Caco-2 (cell line): ENCODE measurements at regions of chr19 and their contacts with region 1.

Region 1: GRCh38 chr19:35269421-35270117 is 807 bp downstream of the USF2 start:
- DNase-seq: peak; percentile 94 to 96
- H3K4me3 ChIP-seq: peak overlapping the region; percentile 61
- H3K4me3 Mint-ChIP-seq: peak overlapping the region; percentile 79
- H3K27ac Mint-ChIP-seq: no peak overlapping the region
- H3K4me1 ChIP-seq: peaks cover 10% of the 10 kb centered on the region
- H3K4me1 Mint-ChIP-seq: no peaks in the 10 kb centered on the region
- H3K27me3 ChIP-seq: no peaks in the 10 kb centered on the region
- H3K27me3 Mint-ChIP-seq: no peaks in the 10 kb centered on the region
- CTCF ChIP-seq: peak; percentile 65 to 99

Region 2: GRCh38 chr19:35279985-35280821 is 10.6 kb after region 1 on chr19:
- CTCF ChIA-PET with region 1: interaction called, 10 read pairs
- POLR2A ChIA-PET with region 1: no interaction called
- intact Hi-C with region 1: no loop called
- DNase-seq: no peak
- H3K4me3 ChIP-seq: no peak overlapping the region
- H3K4me3 Mint-ChIP-seq: no peak overlapping the region
- H3K27ac Mint-ChIP-seq: no peak overlapping the region
- H3K4me1 ChIP-seq: no peaks in the 10 kb centered on the region
- H3K4me1 Mint-ChIP-seq: peaks cover 8% of the 10 kb centered on the region
- H3K27me3 ChIP-seq: no peaks in the 10 kb centered on the region
- H3K27me3 Mint-ChIP-seq: peaks cover 4% of the 10 kb centered on the region
- CTCF ChIP-seq: no peak

Region 3: DNA sequence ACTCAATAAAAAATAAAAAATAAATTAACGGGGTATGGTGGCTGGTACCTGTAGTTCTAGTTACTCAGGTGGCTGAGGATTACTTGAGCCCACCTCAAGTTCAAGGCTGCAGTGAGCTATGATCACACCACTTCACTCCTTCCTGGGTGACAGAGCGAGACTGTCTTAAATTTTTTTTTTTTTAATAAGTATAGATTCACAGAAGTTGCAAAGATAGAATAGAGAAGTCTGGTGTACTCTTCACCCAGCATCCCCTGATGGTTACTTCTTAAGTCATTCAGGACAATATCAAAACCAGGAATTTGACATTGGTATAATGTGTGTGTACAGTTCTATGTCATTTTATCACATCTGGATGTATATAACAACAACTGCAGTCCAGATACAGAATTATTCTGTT is 51.7 kb after region 1 on chr19:
- CTCF ChIA-PET with region 1: no interaction called
- POLR2A ChIA-PET with region 1: no interaction called
- intact Hi-C with region 1: no loop called
- DNase-seq: no peak
- H3K4me3 ChIP-seq: no peak overlapping the region
- H3K4me3 Mint-ChIP-seq: no peak overlapping the region
- H3K27ac Mint-ChIP-seq: no peak overlapping the region
- H3K4me1 ChIP-seq: no peaks in the 10 kb centered on the region
- H3K4me1 Mint-ChIP-seq: peaks cover 14% of the 10 kb centered on the region
- H3K27me3 ChIP-seq: no peaks in the 10 kb centered on the region
- H3K27me3 Mint-ChIP-seq: peaks cover 3% of the 10 kb centered on the region
- CTCF ChIP-seq: no peak

Region 4: DNA sequence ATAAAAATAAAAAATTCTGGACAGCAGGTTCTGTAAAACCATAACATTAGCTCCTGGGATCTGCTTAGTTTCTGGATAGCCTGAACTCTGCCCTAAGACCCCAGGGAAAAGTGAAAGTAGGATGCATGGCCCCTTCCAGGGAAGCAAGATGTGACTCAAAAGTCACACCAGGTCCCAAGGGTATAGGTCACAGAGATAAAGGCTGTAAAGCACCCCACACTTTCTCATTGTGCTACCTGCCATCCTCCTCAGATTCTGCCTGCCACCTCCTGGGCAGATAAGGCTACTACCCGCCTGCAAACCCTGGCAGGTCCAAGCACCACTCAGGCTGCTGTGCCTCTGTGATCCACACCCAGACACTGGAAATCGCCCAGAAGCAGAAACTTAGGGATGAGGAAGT is 199.1 kb after region 1 on chr19:
- CTCF ChIA-PET with region 1: no interaction called
- POLR2A ChIA-PET with region 1: no interaction called
- intact Hi-C with region 1: loop called (anchors 1 kb)
- DNase-seq: peak; percentile 74 to 80
- H3K4me3 ChIP-seq: no peak overlapping the region
- H3K4me3 Mint-ChIP-seq: no peak overlapping the region
- H3K27ac Mint-ChIP-seq: no peak overlapping the region
- H3K4me1 ChIP-seq: peaks cover 10% of the 10 kb centered on the region
- H3K4me1 Mint-ChIP-seq: no peaks in the 10 kb centered on the region
- H3K27me3 ChIP-seq: no peaks in the 10 kb centered on the region
- H3K27me3 Mint-ChIP-seq: no peaks in the 10 kb centered on the region
- CTCF ChIP-seq: peak; percentile 79 to 94